ENCODE measurements at regions of chr14 and their contacts with region 1.

Region 1: DNA sequence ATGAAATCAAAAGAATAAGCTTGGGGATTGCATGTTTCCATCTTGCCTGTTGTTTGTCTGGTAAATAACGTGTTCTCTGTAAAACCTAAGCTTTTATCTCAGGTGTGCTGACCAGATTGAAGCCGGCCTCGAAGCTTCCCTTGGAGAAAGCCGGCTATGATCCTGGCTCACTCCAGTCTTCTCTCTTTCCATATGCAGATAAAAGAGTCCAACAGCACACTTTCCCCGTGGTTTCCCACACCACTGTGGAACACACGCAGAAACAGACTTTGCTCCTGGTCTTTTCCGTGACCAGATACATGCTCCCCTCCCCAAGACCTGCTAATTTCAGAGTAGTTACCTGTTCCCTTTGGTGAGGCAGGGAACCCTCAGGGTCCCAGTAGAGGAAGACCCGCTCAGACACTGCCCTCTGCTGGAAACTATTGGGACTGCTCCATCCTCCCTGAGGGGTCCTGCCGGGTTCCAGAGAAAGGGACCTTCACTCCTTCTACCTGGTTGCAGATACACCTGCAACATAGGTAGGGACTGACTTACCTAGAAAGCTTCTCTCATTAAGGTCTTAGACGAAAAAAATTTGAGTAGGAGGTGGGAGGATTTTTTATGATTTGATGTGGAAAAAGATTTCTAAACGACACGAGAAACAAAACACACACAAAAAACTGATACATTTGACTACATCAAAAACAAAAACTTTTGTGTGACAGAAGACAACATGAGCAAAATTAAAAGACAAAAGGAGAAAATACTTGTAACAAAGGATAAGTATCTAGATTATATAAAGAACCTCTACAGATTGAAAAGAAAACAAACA is 415.5 kb upstream of the CCDC196 start:
- DNase-seq: peak; percentile 29
- H3K4me3 ChIP-seq: no peak overlapping the region
- H3K27ac ChIP-seq: no peak overlapping the region
- H3K4me1 ChIP-seq: peaks cover 23% of the 10 kb centered on the region
- H3K27me3 ChIP-seq: no peaks in the 10 kb centered on the region

Region 2: GRCh38 chr14:65412032-65412846 is 658.5 kb before region 1 on chr14 and contains the start of gene FUT8:
- in situ Hi-C with region 1: loop called (anchors 25 kb)
- DNase-seq: peak; percentile 98
- H3K4me3 ChIP-seq: peak within 1 kb of the TSS; percentile 97
- H3K27ac ChIP-seq: peak within 1 kb of the TSS; percentile 89
- H3K4me1 ChIP-seq: peaks cover 12% of the 10 kb centered on the region
- H3K27me3 ChIP-seq: no peaks in the 10 kb centered on the region
- total RNA-seq, gene FUT8: 60.6 and 83.7 TPM in 2 replicates

Region 3: DNA sequence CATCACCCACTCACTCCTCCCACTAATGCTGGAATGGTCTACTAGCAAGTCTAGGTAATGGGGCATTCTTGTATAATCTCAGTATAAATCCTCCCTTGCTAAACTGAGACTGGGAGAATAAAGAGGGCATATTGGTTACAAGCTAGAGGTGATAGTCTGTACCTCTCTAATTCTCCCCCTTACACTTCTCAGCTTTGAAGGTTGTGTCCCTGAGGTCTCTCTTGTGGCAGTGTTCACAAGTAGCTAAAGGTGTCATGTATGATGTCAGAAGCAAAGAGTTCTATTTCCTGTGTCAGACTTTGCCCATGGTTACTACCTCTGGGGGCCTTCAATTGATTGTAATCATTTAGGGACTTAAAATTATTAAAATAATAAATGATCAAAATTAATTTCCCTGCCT is 388.9 kb after region 1 on chr14:
- in situ Hi-C with region 1: no loop called
- DNase-seq: no peak
- H3K4me3 ChIP-seq: no peak overlapping the region
- H3K27ac ChIP-seq: no peak overlapping the region
- H3K4me1 ChIP-seq: no peaks in the 10 kb centered on the region
- H3K27me3 ChIP-seq: no peaks in the 10 kb centered on the region

Measured in GM23248 (cell line).